ENCODE measurements at regions of chr3 and their contacts with region 1.

Region 1: GRCh38 chr3:11509173-11510000 is 134.3 kb downstream of the VGLL4 start:
- DNase-seq: peak; percentile 52 to 65
- ATAC-seq: peak; percentile 73 to 91 (median 83)
- H3K4me3 ChIP-seq: peak overlapping the region; percentile 3
- H3K27ac ChIP-seq: peak overlapping the region; percentile 85
- H3K4me1 ChIP-seq: peaks cover 37% of the 10 kb centered on the region
- H3K27me3 ChIP-seq: no peaks in the 10 kb centered on the region
- CTCF ChIP-seq: peak; percentile 14

Region 2: GRCh38 chr3:11465744-11466616 is 43.4 kb before region 1 on chr3:
- intact Hi-C with region 1: loop called in 1 of 2 experiments (anchors 5 kb)
- DNase-seq: no peak
- ATAC-seq: peak; percentile 46 to 69 (median 66)
- H3K4me3 ChIP-seq: peak overlapping the region; percentile 6
- H3K27ac ChIP-seq: peak overlapping the region; percentile 94
- H3K4me1 ChIP-seq: peaks cover 40% of the 10 kb centered on the region
- H3K27me3 ChIP-seq: no peaks in the 10 kb centered on the region
- CTCF ChIP-seq: no peak

Region 3: GRCh38 chr3:11548721-11549131 is 39.3 kb after region 1 on chr3:
- intact Hi-C with region 1: no loop called
- DNase-seq: no peak
- ATAC-seq: peak; percentile 51 to 78 (median 68)
- H3K4me3 ChIP-seq: no peak overlapping the region
- H3K27ac ChIP-seq: peak overlapping the region; percentile 39
- H3K4me1 ChIP-seq: peaks cover 16% of the 10 kb centered on the region
- H3K27me3 ChIP-seq: no peaks in the 10 kb centered on the region
- CTCF ChIP-seq: no peak